GM12878 (cell line): ENCODE measurements at regions of chr12 and their contacts with region 1.

Region 1: DNA sequence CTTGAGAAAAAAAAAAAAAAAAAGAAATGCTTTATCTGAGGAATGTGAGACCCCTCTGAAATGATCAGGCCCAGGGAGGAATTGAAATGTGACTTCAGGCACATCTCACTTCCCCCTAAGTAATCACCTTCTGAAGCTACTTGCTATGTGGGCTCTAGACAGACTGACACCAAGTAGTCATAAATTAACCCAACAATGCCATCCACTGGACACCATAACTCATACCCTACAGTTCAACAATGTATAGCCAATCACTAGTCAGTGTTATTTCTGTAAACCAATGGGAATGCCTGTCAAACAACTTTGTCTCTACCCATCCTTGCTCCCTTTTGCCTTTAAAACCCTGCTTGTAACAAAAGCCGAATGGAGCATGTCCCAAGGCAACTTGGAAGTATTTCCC is 182.7 kb upstream of the TMPO start:
- DNase-seq: peak; percentile 64
- ATAC-seq: peak; percentile 91
- H3K4me3 ChIP-seq: no peak overlapping the region
- H3K27ac ChIP-seq: no peak overlapping the region
- H3K4me1 ChIP-seq: no peaks in the 10 kb centered on the region
- H3K27me3 ChIP-seq: peaks cover 0 to 3% of the 10 kb centered on the region in 2 experiments; a peak in 1 of 4 replicates
- CTCF ChIP-seq: peak; percentile 12 to 57 (median 18); a peak in 3 of 6 replicates
- EP300 ChIP-seq: peak in 1 of 2 experiments; percentile 8; a peak in 1 of 4 replicates
- POLR2A ChIP-seq: no peak
- RAD21 ChIP-seq: no peak

Region 2: GRCh38 chr12:98002712-98003493 is 329.7 kb before region 1 on chr12:
- CTCF ChIA-PET with region 1: interaction called, 4 read pairs
- POLR2A ChIA-PET with region 1: no interaction called
- RAD21 ChIA-PET with region 1: interaction called, 6 read pairs
- SMC1A ChIA-PET with region 1: interaction called, 4 read pairs
- in situ Hi-C with region 1: no loop called
- intact Hi-C with region 1: loop called (anchors 1 kb)
- DNase-seq: no peak
- ATAC-seq: peak; percentile 91
- H3K4me3 ChIP-seq: no peak overlapping the region
- H3K27ac ChIP-seq: no peak overlapping the region
- H3K4me1 ChIP-seq: no peaks in the 10 kb centered on the region
- H3K27me3 ChIP-seq: no peaks in the 10 kb centered on the region; a peak in 1 of 4 replicates
- CTCF ChIP-seq: peak; percentile 52 to 60 (median 56); a peak in 5 of 6 replicates
- EP300 ChIP-seq: no peak
- POLR2A ChIP-seq: no peak
- RAD21 ChIP-seq: peak; percentile 58

Region 3: DNA sequence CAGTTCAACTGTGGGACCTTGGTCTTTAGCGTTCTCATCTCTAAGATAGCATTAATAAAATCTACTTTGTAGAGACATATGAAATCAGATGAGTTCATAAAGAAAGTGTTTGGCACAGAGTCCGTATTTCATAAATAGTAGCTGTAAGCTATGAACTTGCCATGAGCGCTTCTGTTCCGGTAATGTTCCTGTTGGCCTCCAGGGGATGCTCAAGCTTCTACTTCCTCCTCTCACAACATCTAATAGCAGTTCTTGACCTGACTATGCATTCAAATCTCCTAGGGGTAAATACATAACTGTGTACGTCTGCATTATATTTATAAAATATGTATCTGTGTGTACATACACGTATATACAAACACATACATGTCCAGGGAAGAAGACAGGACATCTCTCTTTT is 105.5 kb before region 1 on chr12:
- CTCF ChIA-PET with region 1: interaction called, 16 read pairs
- POLR2A ChIA-PET with region 1: interaction called, 3 read pairs
- RAD21 ChIA-PET with region 1: interaction called, 9 read pairs
- SMC1A ChIA-PET with region 1: interaction called, 40 read pairs
- in situ Hi-C with region 1: no loop called
- intact Hi-C with region 1: no loop called
- DNase-seq: no peak
- ATAC-seq: no peak
- H3K4me3 ChIP-seq: no peak overlapping the region
- H3K27ac ChIP-seq: no peak overlapping the region
- H3K4me1 ChIP-seq: peaks cover 6% of the 10 kb centered on the region
- H3K27me3 ChIP-seq: no peaks in the 10 kb centered on the region
- CTCF ChIP-seq: peak in 1 of 3 experiments; percentile 26; a peak in 1 of 6 replicates
- EP300 ChIP-seq: no peak
- POLR2A ChIP-seq: no peak
- RAD21 ChIP-seq: peak; percentile 47; the same call in 1 of the 2 replicates

Region 4: DNA sequence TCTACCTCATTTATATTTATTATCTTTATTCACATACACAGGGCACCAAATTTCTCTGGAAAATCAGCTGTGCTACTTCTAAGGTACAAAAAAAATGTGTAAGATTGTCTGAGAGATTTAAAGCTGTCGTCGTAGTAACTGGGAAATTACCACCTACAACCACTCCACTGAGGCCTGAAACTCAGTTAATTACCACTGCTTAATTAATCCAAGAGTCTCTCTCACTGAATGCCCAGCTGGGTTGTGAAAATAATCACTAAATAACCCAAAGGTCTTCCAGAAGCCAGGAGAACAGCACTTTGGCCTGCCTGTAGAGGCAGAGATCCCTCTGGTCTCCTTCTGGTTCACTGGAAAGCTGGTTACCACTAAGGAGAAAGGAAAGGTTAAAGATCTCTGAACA is 24.5 kb before region 1 on chr12:
- CTCF ChIA-PET with region 1: no interaction called
- POLR2A ChIA-PET with region 1: no interaction called
- RAD21 ChIA-PET with region 1: interaction called, 3 read pairs
- SMC1A ChIA-PET with region 1: interaction called, 13 read pairs
- in situ Hi-C with region 1: no loop called
- intact Hi-C with region 1: no loop called
- DNase-seq: no peak
- ATAC-seq: peak; percentile 25; the same call in 1 of the 3 replicates
- H3K4me3 ChIP-seq: no peak overlapping the region
- H3K27ac ChIP-seq: no peak overlapping the region
- H3K4me1 ChIP-seq: no peaks in the 10 kb centered on the region
- H3K27me3 ChIP-seq: no peaks in the 10 kb centered on the region
- CTCF ChIP-seq: no peak
- EP300 ChIP-seq: no peak
- POLR2A ChIP-seq: no peak
- RAD21 ChIP-seq: no peak

Region 5: GRCh38 chr12:98352218-98352811 is 19.7 kb after region 1 on chr12:
- CTCF ChIA-PET with region 1: interaction called, 18 read pairs
- POLR2A ChIA-PET with region 1: interaction called, 8 read pairs
- RAD21 ChIA-PET with region 1: interaction called, 35 read pairs
- SMC1A ChIA-PET with region 1: interaction called, 80 read pairs
- in situ Hi-C with region 1: no loop called
- intact Hi-C with region 1: no loop called
- DNase-seq: no peak
- ATAC-seq: peak; percentile 82
- H3K4me3 ChIP-seq: no peak overlapping the region
- H3K27ac ChIP-seq: no peak overlapping the region
- H3K4me1 ChIP-seq: peaks cover 4% of the 10 kb centered on the region; the same call in 1 of the 2 replicates
- H3K27me3 ChIP-seq: no peaks in the 10 kb centered on the region
- CTCF ChIP-seq: no peak
- EP300 ChIP-seq: peak in 1 of 2 experiments; percentile 24; a peak in 1 of 4 replicates
- POLR2A ChIP-seq: no peak
- RAD21 ChIP-seq: no peak